ENCODE measurements at regions of chr10 and their contacts with region 1.

Region 1: DNA sequence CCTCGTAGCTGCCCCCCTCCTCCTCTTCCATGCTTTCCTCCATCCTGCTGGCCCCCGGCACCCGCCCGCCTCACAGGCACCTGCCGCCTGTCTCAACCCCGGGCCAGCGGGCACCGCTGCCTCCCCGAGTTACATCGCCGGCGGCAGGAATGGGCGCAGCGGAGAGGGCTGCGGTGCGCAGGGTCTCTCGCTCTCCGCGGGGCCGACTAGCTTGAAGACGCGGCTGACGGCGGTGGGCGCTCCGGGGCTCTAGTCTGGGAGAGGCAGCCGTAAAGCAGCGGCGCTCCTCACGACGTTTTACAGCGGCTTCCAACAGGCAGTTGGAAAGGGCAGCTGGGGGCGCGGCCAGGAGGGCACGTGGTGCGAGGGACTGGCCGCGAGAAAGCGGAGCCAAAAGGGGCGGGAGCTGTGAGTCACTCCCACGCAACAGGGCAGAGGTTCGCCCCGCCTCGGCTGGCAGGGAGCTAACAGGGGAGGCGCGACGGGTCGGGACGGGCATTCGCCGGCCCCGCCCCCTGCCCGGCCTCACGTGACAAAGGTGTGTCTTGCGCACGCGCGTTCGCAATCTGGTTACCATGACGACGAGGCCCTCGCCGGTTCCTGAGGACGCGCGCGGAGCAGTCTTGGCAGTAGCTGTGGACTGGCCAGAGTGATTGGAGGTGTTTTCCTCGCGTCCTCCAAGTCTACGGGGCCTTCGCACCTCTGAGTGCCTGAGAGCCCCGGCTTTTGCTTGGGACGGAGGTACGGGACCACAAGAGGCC is at the start of gene CACUL1:
- DNase-seq: peak; percentile 100
- H3K4me3 Mint-ChIP-seq: peak within 1 kb of the TSS; percentile 91
- H3K27ac Mint-ChIP-seq: peak within 1 kb of the TSS; percentile 79
- H3K4me1 Mint-ChIP-seq: peaks cover 27% of the 10 kb centered on the region
- H3K27me3 Mint-ChIP-seq: peaks cover 14% of the 10 kb centered on the region
- total RNA-seq, gene CACUL1: 22.2 and 25.3 TPM in 2 replicates

Region 2: GRCh38 chr10:118341791-118342637 is 412.9 kb before region 1 on chr10 and contains the start of gene FAM204A:
- intact Hi-C with region 1: loop called (anchors 1 kb)
- DNase-seq: peak; percentile 95
- H3K4me3 Mint-ChIP-seq: peak within 1 kb of the TSS; percentile 94
- H3K27ac Mint-ChIP-seq: peak within 1 kb of the TSS; percentile 82
- H3K4me1 Mint-ChIP-seq: peaks cover 20% of the 10 kb centered on the region
- H3K27me3 Mint-ChIP-seq: peaks cover 3% of the 10 kb centered on the region
- total RNA-seq, gene FAM204A: 53.1 and 55.6 TPM in 2 replicates

Region 3: DNA sequence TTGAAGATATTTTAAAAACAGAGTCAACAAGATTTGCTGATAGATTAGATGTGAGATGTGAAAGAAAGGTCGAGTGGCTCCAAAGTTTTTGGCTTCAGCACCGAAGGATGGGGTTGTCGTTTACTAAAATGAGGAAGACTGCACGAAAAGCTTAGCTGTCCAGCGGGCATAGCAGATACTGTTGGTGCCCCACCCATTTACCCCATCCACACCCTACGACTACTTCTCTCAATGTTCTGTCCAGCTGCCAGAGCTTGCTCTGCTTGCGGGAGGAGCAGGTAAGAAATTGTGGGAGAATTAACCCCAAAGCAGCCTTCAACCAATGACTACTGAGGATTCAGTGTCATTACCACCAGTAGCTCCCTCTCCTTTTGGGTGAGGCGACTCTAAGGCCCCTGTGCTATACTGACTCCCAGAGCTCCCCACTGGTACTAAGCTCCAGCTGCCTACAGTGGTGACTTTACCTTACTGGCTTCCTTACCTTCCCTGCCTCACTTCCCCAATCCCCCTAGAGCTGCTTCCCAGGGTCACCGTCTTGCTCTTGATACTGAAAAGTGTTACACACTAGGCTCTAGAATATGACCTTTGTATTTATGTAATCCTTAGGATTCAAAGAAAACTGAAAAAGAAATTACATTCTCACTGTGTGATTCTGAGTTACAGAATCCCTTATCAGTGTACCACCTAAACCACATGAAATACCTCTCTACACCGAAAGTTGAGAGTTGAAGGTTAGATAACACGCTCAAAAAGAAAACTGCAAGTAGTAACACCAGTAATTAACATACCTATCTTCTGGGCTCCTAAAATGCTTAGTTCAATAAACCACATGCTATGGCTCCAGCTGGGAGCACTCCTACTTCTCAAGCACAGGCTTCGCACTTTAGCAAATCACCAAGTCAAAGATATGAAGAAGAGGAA is 22.4 kb before region 1 on chr10:
- intact Hi-C with region 1: loop called (anchors 2 kb)
- DNase-seq: no peak
- H3K4me3 Mint-ChIP-seq: no peak overlapping the region
- H3K27ac Mint-ChIP-seq: no peak overlapping the region
- H3K4me1 Mint-ChIP-seq: peaks cover 45% of the 10 kb centered on the region
- H3K27me3 Mint-ChIP-seq: peaks cover 33% of the 10 kb centered on the region

Region 4: DNA sequence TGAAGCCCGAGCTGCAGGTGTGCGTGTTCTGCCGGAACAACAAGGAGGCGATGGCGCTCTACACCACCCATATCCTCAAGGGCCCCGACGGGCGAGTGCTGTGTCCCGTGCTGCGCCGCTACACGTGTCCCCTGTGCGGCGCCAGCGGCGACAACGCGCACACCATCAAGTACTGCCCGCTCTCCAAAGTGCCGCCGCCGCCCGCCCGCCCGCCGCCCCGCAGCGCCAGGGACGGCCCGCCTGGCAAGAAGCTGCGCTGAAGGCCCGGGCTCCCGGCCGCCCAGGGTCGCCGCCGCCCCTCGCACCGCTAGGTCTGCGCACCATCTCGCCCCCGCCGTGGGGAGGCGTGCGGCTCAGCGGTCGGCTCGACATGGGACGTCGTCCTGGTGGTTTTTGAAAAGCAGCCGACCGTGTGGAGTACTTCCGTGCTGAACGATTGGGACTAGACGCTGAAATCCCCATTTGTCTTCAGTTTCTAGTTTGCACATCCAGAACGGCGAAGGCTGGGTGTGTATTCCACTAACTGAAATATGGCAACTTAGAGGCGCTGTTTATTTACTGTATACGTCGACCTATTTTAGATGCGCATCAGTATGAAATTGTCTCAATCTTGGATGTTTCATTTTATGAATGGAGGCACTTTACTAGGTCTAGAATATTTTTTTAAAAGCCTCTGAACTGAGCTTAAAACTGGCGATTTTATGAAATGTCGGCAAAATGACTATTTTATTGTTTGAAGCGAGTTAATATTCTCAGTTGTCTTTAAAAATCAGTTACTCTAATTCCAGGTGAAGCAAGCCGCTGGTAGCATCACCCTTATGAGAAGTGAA is 275.7 kb after region 1 on chr10:
- intact Hi-C with region 1: loop called (anchors 2 kb)
- DNase-seq: peak; percentile 57
- H3K4me3 Mint-ChIP-seq: peak overlapping the region; percentile 61
- H3K27ac Mint-ChIP-seq: no peak overlapping the region
- H3K4me1 Mint-ChIP-seq: peaks cover 13% of the 10 kb centered on the region
- H3K27me3 Mint-ChIP-seq: peaks cover 15% of the 10 kb centered on the region

Region 5: GRCh38 chr10:119165171-119166110 is 410.5 kb after region 1 on chr10 and contains the start of gene SFXN4:
- intact Hi-C with region 1: loop called (anchors 10 kb)
- DNase-seq: peak; percentile 81
- H3K4me3 Mint-ChIP-seq: peak within 1 kb of the TSS; percentile 85
- H3K27ac Mint-ChIP-seq: peak within 1 kb of the TSS; percentile 93
- H3K4me1 Mint-ChIP-seq: peaks cover 37% of the 10 kb centered on the region
- H3K27me3 Mint-ChIP-seq: no peaks in the 10 kb centered on the region
- total RNA-seq, gene SFXN4: 43.5 and 44.8 TPM in 2 replicates

Measured in activated T-helper 2 cell treated with anti-CD3 and anti-CD28 coated beads, Interferon-gamma antibody, Interleukin-2, Interleukin-4, amounts not matched to agents 10 μg/mL and 5 μg/mL and 100 μg/mL, durations not matched to agents 14 hours and 24 hours and 36 hours (primary cell).